Activated T-helper 1 cell treated with anti-CD3 and anti-CD28 coated beads, Interleukin-12 subunit alpha, Interleukin-12 subunit beta, Interleukin-2, Interleukin-4 antibody, amounts not matched to agents 30 ng/mL and 10 ng/mL and 1 ng/mL, durations not matched to agents 14 hours and 24 hours and 36 hours (primary cell): ENCODE measurements at regions of chr6 and their contacts with region 1.

Region 1: DNA sequence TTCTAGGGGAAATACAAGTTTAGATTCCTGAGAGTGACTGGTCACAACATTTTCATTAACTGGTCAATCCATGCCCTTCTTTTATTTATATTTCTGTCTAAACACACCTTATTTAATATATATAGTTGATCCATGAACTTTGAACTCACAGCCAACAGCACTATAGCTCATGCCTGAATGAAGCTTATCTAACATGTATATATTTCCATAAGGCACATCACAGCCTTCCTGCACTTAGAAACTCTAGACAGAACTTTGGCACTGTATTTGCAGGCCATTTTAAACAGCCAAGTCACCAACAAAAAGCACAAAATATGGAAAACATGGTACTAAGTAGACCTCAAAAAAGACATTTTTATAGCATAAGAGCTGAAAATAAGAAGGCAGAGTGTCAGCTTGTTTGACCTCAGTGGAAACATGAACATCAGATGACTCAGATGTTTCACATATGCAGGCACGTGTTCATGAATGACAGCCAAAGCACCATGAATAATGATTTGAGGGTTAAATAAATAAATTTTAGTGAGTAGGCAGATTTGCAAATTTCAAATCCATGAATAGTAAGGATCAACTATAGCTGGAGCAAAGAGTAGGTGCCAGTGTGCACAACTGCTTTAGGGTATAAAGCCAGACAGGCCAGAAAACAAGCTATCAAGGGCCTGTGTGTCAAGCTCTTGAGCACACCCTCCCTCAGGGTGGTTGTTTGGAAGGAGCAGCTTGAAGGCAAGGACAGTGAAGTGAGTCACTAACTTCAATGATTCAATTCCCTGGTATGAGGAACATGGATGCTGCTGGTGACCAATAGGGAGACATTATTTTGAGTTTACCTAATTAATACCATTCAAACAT is 88.9 kb upstream of the NT5E start:
- DNase-seq: no peak
- H3K4me3 Mint-ChIP-seq: no peak overlapping the region
- H3K27ac Mint-ChIP-seq: peak overlapping the region; percentile 35
- H3K4me1 Mint-ChIP-seq: peaks cover 26% of the 10 kb centered on the region
- H3K27me3 Mint-ChIP-seq: peaks cover 2% of the 10 kb centered on the region

Region 2: DNA sequence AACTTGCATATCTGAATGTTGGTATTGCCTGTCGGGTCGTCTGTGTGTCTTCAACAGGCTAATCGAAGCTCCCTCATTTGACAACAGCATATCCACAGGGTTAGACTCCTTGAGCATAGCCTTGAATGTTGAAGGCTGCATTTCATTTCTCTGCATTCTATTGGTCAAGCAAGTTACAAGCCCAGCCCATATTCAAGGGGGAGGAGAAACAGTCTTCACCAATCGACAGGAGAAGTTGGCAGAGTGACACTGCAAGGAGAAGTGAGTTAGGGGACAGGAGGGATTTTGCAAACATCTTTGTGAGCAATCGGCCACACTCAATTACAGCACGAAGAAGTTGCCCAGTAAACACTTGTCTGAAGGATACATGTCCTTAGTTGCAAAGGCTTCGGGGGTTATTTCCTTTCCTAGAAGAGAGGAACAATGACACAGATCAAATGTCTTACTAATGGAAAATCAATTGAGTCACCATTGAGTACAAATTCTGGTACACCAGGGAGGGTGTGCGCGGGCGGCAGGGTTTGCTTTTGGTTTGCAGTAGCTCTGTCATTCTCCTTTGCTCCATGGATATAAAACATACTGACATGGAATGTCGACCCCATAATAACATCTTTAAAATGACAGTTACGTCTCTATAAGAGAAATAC is 28.3 kb after region 1 on chr6:
- intact Hi-C with region 1: loop called (anchors 2 kb)
- DNase-seq: no peak
- H3K4me3 Mint-ChIP-seq: peak overlapping the region; percentile 3
- H3K27ac Mint-ChIP-seq: peak overlapping the region; percentile 36
- H3K4me1 Mint-ChIP-seq: peaks cover 34% of the 10 kb centered on the region
- H3K27me3 Mint-ChIP-seq: peaks cover 5% of the 10 kb centered on the region

Region 3: DNA sequence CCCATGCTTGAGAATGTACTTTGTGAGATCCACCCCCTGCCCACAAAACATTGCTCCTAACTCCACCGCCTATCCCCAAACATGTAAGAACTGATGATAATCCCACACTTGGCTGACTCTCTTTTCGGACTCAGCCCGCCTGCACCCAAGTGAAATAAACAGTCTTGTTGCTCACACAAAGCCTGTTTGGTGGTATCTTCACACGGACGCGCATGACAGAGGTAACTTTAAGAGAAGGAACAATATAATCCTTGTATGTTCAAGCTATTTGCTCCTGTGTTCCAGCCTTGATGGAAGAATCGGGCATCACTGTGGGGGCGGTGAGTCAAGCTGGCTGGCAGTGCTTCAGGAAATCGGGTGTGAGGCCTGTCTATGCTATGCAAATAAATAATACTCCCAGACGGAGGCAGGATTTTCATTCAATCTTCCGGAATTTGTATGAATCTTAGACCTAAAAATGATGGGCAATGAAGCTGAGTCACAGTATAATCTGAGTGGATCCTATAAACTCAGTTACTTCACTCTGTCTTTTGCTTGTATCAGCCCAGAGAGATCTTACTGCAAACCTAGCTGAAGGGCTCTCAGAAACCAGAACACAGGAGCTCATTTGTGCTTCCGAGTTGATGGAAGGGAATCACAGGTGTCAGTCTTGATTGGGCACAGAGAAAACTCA is 43.6 kb after region 1 on chr6:
- intact Hi-C with region 1: loop called (anchors 5 kb)
- DNase-seq: no peak
- H3K4me3 Mint-ChIP-seq: no peak overlapping the region
- H3K27ac Mint-ChIP-seq: peak overlapping the region; percentile 35
- H3K4me1 Mint-ChIP-seq: peaks cover 52% of the 10 kb centered on the region
- H3K27me3 Mint-ChIP-seq: no peaks in the 10 kb centered on the region

Region 4: DNA sequence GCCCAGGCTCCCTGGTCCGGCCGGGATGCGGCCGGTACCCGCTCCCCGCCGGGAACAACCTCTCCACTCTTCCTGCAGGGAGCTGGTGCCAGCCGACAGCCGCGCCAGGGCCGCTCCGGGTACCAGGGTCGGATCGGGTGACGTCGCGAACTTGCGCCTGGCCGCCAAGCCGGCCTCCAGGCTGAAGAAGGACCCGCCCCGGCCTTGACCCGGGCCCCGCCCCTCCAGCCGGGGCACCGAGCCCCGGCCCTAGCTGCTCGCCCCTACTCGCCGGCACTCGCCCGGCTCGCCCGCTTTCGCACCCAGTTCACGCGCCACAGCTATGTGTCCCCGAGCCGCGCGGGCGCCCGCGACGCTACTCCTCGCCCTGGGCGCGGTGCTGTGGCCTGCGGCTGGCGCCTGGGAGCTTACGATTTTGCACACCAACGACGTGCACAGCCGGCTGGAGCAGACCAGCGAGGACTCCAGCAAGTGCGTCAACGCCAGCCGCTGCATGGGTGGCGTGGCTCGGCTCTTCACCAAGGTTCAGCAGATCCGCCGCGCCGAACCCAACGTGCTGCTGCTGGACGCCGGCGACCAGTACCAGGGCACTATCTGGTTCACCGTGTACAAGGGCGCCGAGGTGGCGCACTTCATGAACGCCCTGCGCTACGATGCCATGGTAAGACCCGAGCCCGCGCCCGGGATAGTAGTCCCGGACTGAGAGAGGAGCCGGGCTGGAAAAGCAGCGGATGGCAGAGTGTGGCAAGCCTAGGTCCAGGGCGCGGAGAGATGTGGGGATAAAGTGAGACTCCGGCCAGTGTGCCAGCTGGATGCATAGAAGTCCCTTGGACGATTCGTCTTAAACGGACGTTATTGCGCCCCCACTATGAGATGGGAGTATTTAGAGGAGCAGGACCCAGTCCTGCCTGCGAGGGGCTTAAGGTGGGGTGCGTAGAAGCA is 89.1 kb after region 1 on chr6 and contains the start of gene NT5E:
- intact Hi-C with region 1: loop called (anchors 1 kb)
- DNase-seq: peak; percentile 37
- H3K4me3 Mint-ChIP-seq: peak within 1 kb of the TSS; percentile 98
- H3K27ac Mint-ChIP-seq: peak within 1 kb of the TSS; percentile 89
- H3K4me1 Mint-ChIP-seq: peaks cover 66% of the 10 kb centered on the region
- H3K27me3 Mint-ChIP-seq: peaks cover 31% of the 10 kb centered on the region
- total RNA-seq, gene NT5E: 12.5 and 15.2 TPM in 2 replicates

Region 5: GRCh38 chr6:85580882-85581267 is 219.9 kb after region 1 on chr6:
- intact Hi-C with region 1: no loop called
- DNase-seq: no peak
- H3K4me3 Mint-ChIP-seq: no peak overlapping the region
- H3K27ac Mint-ChIP-seq: no peak overlapping the region
- H3K4me1 Mint-ChIP-seq: peaks cover 9% of the 10 kb centered on the region
- H3K27me3 Mint-ChIP-seq: no peaks in the 10 kb centered on the region

Region 6: DNA sequence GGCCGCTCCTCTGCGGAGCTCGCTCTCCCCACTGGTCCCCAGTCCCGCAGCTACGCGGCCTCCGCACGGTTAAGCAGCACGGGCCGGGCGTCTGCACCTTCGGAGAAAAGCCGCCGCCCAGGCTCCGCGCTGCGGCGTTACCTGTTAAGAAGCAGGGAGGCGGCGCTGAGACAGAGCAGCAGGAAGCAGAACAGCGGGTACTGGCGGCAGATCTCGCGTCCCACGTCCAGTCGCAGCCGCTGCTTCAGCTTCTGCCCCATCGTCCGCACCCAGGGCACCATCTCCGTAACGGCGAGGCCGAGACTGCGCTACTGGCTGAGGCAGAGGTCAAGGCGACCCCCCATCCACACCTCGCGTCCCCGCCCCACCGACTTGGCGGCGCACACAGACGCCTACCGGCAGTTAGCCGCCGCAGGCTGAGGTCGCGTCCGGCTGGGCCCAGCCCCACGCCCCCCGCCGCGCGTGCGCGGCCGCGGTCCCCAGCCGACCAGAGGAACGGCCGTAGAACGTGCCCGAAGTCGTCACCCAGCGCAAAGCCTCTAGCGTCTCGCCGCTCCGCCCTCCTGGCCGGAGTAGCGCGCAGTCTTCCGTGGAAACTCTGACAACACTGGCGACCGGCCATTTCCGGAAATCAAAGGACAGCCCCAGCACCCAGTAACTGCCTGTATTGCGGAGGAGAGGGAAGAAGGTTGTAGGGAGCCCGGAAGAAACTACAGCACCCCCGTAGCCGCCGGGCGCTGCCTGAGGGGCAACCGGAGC is 232.6 kb after region 1 on chr6 and contains the start of gene SNX14:
- intact Hi-C with region 1: loop called (anchors 5 kb)
- DNase-seq: peak; percentile 74
- H3K4me3 Mint-ChIP-seq: peak within 1 kb of the TSS; percentile 94
- H3K27ac Mint-ChIP-seq: peak within 1 kb of the TSS; percentile 93
- H3K4me1 Mint-ChIP-seq: peaks cover 14% of the 10 kb centered on the region
- H3K27me3 Mint-ChIP-seq: no peaks in the 10 kb centered on the region
- total RNA-seq, gene SNX14: 49.5 and 51.0 TPM in 2 replicates